B cell (primary cell): ENCODE measurements at regions of chr1 and their contacts with region 1.

Region 1: DNA sequence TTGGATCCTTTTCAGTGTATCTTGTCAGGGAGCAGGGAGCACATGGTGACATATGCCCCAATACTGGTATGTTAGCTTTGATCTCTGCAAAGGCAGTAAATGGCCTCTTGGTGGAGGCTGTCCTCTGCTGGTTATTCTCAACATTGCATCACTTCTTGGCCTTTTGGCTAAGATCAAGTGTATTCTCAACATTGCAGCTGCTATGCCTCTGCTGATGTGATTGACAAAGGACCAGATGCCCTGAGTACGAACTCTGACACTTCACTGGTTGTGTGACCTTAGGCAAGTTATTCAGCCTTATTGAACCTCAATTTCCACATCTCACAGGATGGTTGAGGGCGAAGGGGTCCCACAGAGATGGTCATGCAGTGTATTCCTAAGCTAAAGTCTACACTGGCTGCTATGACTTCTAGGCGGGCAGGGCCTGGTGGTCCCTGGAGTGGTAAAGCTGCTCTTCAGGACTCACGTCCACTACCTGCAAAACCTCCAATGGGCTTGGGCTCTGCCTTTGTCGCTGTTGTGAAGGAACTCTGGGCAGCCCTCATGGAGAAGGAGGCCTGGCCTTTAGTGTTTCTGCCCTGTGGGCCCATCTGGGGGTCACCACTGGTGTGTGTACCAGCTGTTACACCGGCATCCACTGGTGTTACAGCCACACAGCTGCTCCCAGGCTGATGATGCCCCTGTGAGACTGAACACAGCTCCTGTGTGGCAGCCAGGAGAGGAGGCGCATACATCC is 64.8 kb downstream of the DNTTIP2 start:
- DNase-seq: peak; percentile 80
- ATAC-seq: peak; percentile 91
- H3K4me3 ChIP-seq: no peak overlapping the region
- H3K4me3 Mint-ChIP-seq: no peak overlapping the region
- H3K27ac ChIP-seq: no peak overlapping the region
- H3K27ac Mint-ChIP-seq: no peak overlapping the region
- H3K4me1 ChIP-seq: peaks cover 14 to 22% of the 10 kb centered on the region in 2 donors
- H3K4me1 Mint-ChIP-seq: peaks cover 17% of the 10 kb centered on the region
- H3K27me3 ChIP-seq: no peaks in the 10 kb centered on the region
- H3K27me3 Mint-ChIP-seq: no peaks in the 10 kb centered on the region
- CTCF ChIP-seq: peak; percentile 97

Region 2: DNA sequence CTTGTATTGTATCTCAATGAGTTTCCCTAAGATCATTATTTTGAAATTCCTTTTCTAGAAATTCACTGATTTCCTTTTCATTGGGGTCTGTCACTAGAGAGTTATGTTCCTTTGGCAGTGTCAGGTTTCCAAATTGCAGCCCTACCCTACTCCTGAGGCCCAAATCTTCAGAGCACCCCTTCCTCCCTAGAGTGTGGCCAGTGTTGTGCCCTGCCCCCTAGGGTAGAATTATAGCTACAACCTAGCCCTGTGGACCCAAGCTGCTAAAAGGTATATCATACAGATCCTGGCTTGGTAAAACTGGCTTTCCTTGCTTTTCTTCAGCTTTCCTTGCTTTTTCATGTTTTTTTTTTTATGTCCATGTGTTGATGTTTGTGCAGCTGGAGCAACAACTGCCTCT is 913.7 kb before region 1 on chr1:
- CTCF ChIA-PET with region 1: no interaction called
- POLR2A ChIA-PET with region 1: no interaction called
- intact Hi-C with region 1: no loop called
- DNase-seq: no peak
- ATAC-seq: no peak
- H3K4me3 ChIP-seq: no peak overlapping the region
- H3K4me3 Mint-ChIP-seq: no peak overlapping the region
- H3K27ac ChIP-seq: no peak overlapping the region
- H3K27ac Mint-ChIP-seq: no peak overlapping the region
- H3K4me1 ChIP-seq: peaks cover 14 to 19% of the 10 kb centered on the region in 2 donors
- H3K4me1 Mint-ChIP-seq: peaks cover 52% of the 10 kb centered on the region
- H3K27me3 ChIP-seq: no peaks in the 10 kb centered on the region
- H3K27me3 Mint-ChIP-seq: no peaks in the 10 kb centered on the region
- CTCF ChIP-seq: no peak

Region 3: GRCh38 chr1:93304716-93305138 is 509.5 kb before region 1 on chr1:
- CTCF ChIA-PET with region 1: interaction called, 22 read pairs
- POLR2A ChIA-PET with region 1: no interaction called
- intact Hi-C with region 1: loop called (anchors 10 kb)
- DNase-seq: peak; percentile 73
- ATAC-seq: peak; percentile 53
- H3K4me3 ChIP-seq: no peak overlapping the region
- H3K4me3 Mint-ChIP-seq: no peak overlapping the region
- H3K27ac ChIP-seq: no peak overlapping the region
- H3K27ac Mint-ChIP-seq: no peak overlapping the region
- H3K4me1 ChIP-seq: no peaks in the 10 kb centered on the region
- H3K4me1 Mint-ChIP-seq: no peaks in the 10 kb centered on the region
- H3K27me3 ChIP-seq: no peaks in the 10 kb centered on the region
- H3K27me3 Mint-ChIP-seq: no peaks in the 10 kb centered on the region
- CTCF ChIP-seq: peak; percentile 88

Region 4: DNA sequence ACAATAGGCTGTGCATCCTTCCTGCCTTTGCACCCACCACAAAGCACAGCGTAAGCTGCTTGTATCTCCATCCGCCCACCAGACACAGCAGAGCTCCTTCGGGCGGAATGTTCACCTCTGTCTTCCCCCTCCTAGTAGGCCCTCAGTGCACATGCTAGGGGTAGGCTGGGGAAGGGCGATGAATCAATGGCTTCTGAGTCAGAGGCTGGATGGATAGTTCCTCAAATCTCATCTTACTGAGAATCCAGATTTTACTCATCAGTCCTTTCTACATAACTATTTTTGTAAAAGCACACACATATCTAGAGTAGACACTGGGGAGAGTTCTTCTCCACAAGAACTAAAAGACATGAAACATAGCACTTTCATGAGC is 206.4 kb before region 1 on chr1:
- CTCF ChIA-PET with region 1: interaction called, 10 read pairs
- POLR2A ChIA-PET with region 1: no interaction called
- intact Hi-C with region 1: no loop called
- DNase-seq: no peak
- ATAC-seq: peak; percentile 75
- H3K4me3 ChIP-seq: no peak overlapping the region
- H3K4me3 Mint-ChIP-seq: peak overlapping the region; percentile 23
- H3K27ac ChIP-seq: no peak overlapping the region
- H3K27ac Mint-ChIP-seq: peak overlapping the region; percentile 66
- H3K4me1 ChIP-seq: peaks cover 0 to 28% of the 10 kb centered on the region in 2 donors
- H3K4me1 Mint-ChIP-seq: peaks cover 55% of the 10 kb centered on the region
- H3K27me3 ChIP-seq: no peaks in the 10 kb centered on the region
- H3K27me3 Mint-ChIP-seq: no peaks in the 10 kb centered on the region
- CTCF ChIP-seq: no peak

Region 5: GRCh38 chr1:93680757-93681550 is 133.3 kb before region 1 on chr1:
- CTCF ChIA-PET with region 1: interaction called, 43 read pairs
- POLR2A ChIA-PET with region 1: interaction called, 3 read pairs
- intact Hi-C with region 1: loop called (anchors 1 kb)
- DNase-seq: peak; percentile 86
- ATAC-seq: peak; percentile 78
- H3K4me3 ChIP-seq: peak overlapping the region; percentile 65 to 86 (median 76)
- H3K4me3 Mint-ChIP-seq: peak overlapping the region; percentile 100
- H3K27ac ChIP-seq: peak overlapping the region; percentile 12 to 25
- H3K27ac Mint-ChIP-seq: peak overlapping the region; percentile 98
- H3K4me1 ChIP-seq: peaks cover 23 to 34% of the 10 kb centered on the region in 2 donors
- H3K4me1 Mint-ChIP-seq: peaks cover 69% of the 10 kb centered on the region
- H3K27me3 ChIP-seq: no peaks in the 10 kb centered on the region
- H3K27me3 Mint-ChIP-seq: no peaks in the 10 kb centered on the region
- CTCF ChIP-seq: peak; percentile 46

Region 6: DNA sequence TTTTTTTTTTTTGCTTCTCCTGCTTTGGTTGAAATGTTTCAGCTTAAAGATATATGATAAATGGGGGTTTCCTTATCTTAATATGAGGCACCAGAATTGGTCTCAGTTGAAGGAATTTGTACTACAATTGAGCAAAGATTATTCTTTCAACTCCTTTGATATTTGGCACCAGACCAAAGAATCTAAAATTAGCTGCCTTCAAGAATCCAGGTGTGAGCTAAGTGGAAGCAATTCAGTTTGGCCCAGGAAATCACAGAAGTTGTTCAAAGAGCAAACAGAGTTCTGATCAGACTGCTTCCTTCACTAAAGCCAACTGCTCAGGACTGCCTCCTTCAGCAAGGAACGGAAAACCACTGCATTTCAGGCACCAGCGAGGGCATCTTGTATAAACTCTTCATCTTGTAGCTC is 64.3 kb before region 1 on chr1:
- CTCF ChIA-PET with region 1: interaction called, 6 read pairs
- POLR2A ChIA-PET with region 1: no interaction called
- intact Hi-C with region 1: loop called (anchors 2 kb)
- DNase-seq: peak; percentile 82
- ATAC-seq: peak; percentile 48
- H3K4me3 ChIP-seq: peak overlapping the region in 2 of 5 experiments; percentile 5 to 40
- H3K4me3 Mint-ChIP-seq: peak overlapping the region; percentile 73
- H3K27ac ChIP-seq: peak overlapping the region; percentile 86 to 87
- H3K27ac Mint-ChIP-seq: peak overlapping the region; percentile 93
- H3K4me1 ChIP-seq: peaks cover 34 to 41% of the 10 kb centered on the region in 2 donors
- H3K4me1 Mint-ChIP-seq: peaks cover 55% of the 10 kb centered on the region
- H3K27me3 ChIP-seq: no peaks in the 10 kb centered on the region
- H3K27me3 Mint-ChIP-seq: no peaks in the 10 kb centered on the region
- CTCF ChIP-seq: peak; percentile 56

Region 7: GRCh38 chr1:93770640-93771039 is 43.6 kb before region 1 on chr1:
- CTCF ChIA-PET with region 1: no interaction called
- POLR2A ChIA-PET with region 1: no interaction called
- intact Hi-C with region 1: no loop called
- DNase-seq: no peak
- ATAC-seq: no peak
- H3K4me3 ChIP-seq: no peak overlapping the region
- H3K4me3 Mint-ChIP-seq: no peak overlapping the region
- H3K27ac ChIP-seq: no peak overlapping the region
- H3K27ac Mint-ChIP-seq: no peak overlapping the region
- H3K4me1 ChIP-seq: no peaks in the 10 kb centered on the region
- H3K4me1 Mint-ChIP-seq: peaks cover 4% of the 10 kb centered on the region
- H3K27me3 ChIP-seq: no peaks in the 10 kb centered on the region
- H3K27me3 Mint-ChIP-seq: no peaks in the 10 kb centered on the region
- CTCF ChIP-seq: no peak

Region 8: GRCh38 chr1:93878889-93879586 is 64.8 kb after region 1 on chr1 and contains the start of gene DNTTIP2:
- CTCF ChIA-PET with region 1: interaction called, 5 read pairs
- POLR2A ChIA-PET with region 1: no interaction called
- intact Hi-C with region 1: loop called (anchors 1 kb)
- DNase-seq: peak; percentile 91
- ATAC-seq: peak; percentile 89
- H3K4me3 ChIP-seq: peak within 1 kb of the TSS; percentile 82 to 99 (median 96)
- H3K4me3 Mint-ChIP-seq: peak within 1 kb of the TSS; percentile 98
- H3K27ac ChIP-seq: peak within 1 kb of the TSS; percentile 89 to 94
- H3K27ac Mint-ChIP-seq: peak within 1 kb of the TSS; percentile 100
- H3K4me1 ChIP-seq: peaks cover 26 to 30% of the 10 kb centered on the region in 2 donors
- H3K4me1 Mint-ChIP-seq: peaks cover 42% of the 10 kb centered on the region
- H3K27me3 ChIP-seq: no peaks in the 10 kb centered on the region
- H3K27me3 Mint-ChIP-seq: no peaks in the 10 kb centered on the region
- CTCF ChIP-seq: no peak
- total RNA-seq, gene DNTTIP2: 58.3 and 62.1 TPM in 2 replicates